ENCODE measurements at regions of chr16 and their contacts with region 1.

Region 1: GRCh38 chr16:13829697-13830299 is 90.2 kb upstream of the ERCC4 start:
- DNase-seq: no peak
- H3K4me3 ChIP-seq: no peak overlapping the region
- H3K27ac ChIP-seq: no peak overlapping the region
- H3K4me1 ChIP-seq: no peaks in the 10 kb centered on the region
- H3K27me3 ChIP-seq: no peaks in the 10 kb centered on the region
- CTCF ChIP-seq: no peak
- EP300 ChIP-seq: no peak
- POLR2A ChIP-seq: no peak

Region 2: DNA sequence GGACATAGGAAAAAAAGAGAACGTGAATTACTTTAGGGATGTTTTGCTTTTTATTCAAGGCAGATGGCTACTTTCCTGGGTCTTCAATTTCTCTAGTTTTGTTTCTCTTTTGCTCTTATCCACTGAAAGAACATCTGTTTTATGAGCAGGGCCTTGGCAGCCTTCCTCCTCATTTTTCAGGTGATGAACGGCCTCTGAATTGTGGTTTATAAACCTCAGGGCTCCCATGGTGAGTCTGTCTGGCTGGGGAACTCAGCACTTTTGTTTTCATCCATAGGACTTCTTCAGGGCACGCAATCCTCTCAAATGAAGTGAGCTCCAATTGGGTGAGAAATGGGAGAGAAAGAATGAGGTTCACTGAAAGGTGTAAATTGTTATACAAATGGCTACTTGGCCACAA is 96.3 kb before region 1 on chr16:
- in situ Hi-C with region 1: loop called in 1 of 4 experiments (anchors 25 kb)
- intact Hi-C with region 1: no loop called
- DNase-seq: no peak
- H3K4me3 ChIP-seq: no peak overlapping the region
- H3K27ac ChIP-seq: no peak overlapping the region
- H3K4me1 ChIP-seq: no peaks in the 10 kb centered on the region
- H3K27me3 ChIP-seq: no peaks in the 10 kb centered on the region
- CTCF ChIP-seq: no peak
- EP300 ChIP-seq: no peak
- POLR2A ChIP-seq: no peak

Region 3: GRCh38 chr16:13873835-13874438 is 44.1 kb after region 1 on chr16:
- in situ Hi-C with region 1: no loop called
- intact Hi-C with region 1: no loop called
- DNase-seq: no peak
- H3K4me3 ChIP-seq: no peak overlapping the region
- H3K27ac ChIP-seq: no peak overlapping the region
- H3K4me1 ChIP-seq: no peaks in the 10 kb centered on the region
- H3K27me3 ChIP-seq: no peaks in the 10 kb centered on the region
- CTCF ChIP-seq: peak in 3 of 5 experiments; percentile 7 to 16 (median 11)
- EP300 ChIP-seq: no peak
- POLR2A ChIP-seq: no peak

Measured in transverse colon (tissue), 4 donors.